Mammary epithelial cell (primary cell): ENCODE measurements at regions of chr16 and their contacts with region 1.

Region 1: GRCh38 chr16:23803591-23804123 is 32.1 kb upstream of the PRKCB start:
- DNase-seq: peak; percentile 38
- H3K4me3 ChIP-seq: no peak overlapping the region
- H3K27ac ChIP-seq: no peak overlapping the region
- H3K4me1 ChIP-seq: no peaks in the 10 kb centered on the region
- H3K27me3 ChIP-seq: no peaks in the 10 kb centered on the region
- CTCF ChIP-seq: peak; percentile 70 to 85

Region 2: DNA sequence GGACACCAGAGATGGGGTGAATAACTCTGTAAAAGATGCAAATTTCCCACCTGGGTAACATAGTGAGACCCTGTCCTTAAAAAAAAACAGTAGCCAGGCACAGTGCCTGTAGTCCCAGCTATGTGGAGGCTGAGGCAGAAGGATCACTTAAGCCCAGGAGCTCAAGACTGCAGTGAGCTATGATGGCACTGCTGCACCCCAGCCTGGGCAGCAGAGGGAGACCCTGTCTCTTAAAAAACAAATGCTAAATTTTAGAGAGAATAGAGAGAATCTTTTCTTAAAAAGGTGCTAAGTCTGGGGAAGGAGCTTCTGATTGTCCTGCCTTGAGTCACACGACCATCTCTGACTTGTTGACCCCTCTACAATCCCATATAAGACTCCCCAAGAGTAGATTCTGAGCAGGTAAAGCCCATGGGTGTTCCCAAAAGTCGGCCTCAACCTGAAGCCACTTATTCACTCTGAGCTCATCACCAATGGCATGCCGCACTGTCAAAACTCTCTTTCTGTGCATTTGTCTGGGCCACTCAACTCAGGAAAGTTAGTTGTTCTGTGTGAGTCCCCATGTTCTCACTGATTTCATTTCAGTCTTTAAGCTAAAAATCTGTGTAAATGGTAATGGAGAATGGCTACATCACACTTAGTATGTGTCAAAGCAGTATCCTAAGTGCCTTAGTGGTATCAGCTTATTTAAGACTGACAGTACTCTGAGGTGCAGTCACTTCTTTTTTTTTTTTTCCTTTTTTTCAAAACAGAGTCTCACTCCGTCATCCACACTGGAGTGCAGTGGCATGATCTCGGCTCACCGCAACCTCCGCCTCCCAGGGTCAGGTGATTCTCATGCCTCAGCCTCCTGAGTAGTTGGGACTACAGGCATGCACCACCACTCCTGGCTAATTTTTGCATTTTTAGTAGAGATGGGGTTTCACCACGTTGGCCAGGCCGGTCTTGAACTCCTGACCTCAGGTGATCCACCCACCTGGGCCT is 73.7 kb after region 1 on chr16:
- CTCF ChIA-PET with region 1: no interaction called
- dilution Hi-C with region 1: no loop called
- in situ Hi-C with region 1: no loop called
- intact Hi-C with region 1: loop called (anchors 10 kb)
- DNase-seq: no peak
- H3K4me3 ChIP-seq: no peak overlapping the region
- H3K27ac ChIP-seq: no peak overlapping the region
- H3K4me1 ChIP-seq: no peaks in the 10 kb centered on the region
- H3K27me3 ChIP-seq: no peaks in the 10 kb centered on the region
- CTCF ChIP-seq: peak in 1 of 2 donors; percentile 10

Region 3: GRCh38 chr16:24010440-24011089 is 206.9 kb after region 1 on chr16:
- CTCF ChIA-PET with region 1: interaction called, 14 read pairs
- dilution Hi-C with region 1: loop called (anchors 10 kb)
- in situ Hi-C with region 1: loop called (anchors 5 kb)
- intact Hi-C with region 1: loop called (anchors 1 kb)
- DNase-seq: peak; percentile 66
- H3K4me3 ChIP-seq: no peak overlapping the region
- H3K27ac ChIP-seq: no peak overlapping the region
- H3K4me1 ChIP-seq: no peaks in the 10 kb centered on the region
- H3K27me3 ChIP-seq: peaks cover 2% of the 10 kb centered on the region
- CTCF ChIP-seq: peak; percentile 76 to 85

Region 4: DNA sequence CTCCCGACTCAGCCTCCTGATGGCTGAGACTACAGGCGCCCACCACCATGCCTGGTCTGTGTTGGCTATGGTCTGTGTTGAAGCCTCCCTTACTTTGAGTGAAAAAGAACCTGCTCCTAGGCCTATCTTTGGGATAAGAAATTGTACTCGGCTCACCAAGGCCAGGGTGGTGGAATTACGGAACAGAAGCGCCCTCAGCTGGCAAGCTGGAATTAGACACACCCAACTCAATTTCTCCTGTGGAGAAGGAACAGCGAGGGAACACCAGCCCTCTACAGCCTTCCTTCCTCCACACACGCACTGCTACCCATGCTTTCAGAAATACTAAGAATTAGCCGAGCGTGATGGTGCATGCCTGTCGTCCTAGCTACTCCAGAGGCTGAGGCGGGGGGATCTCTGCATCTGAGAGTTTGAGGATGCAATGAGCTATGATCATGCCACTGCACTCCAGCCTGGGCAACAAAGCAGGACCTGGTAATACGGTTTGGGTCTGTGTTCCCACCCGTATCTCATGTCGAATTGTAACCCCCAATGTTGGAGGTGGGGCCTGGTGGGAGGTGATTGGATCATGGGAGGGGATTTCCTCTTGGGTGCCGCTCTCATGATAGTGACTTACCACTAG is 695.6 kb after region 1 on chr16:
- CTCF ChIA-PET with region 1: no interaction called
- dilution Hi-C with region 1: no loop called
- in situ Hi-C with region 1: loop called (anchors 25 kb)
- intact Hi-C with region 1: loop called (anchors 1 kb)
- DNase-seq: peak; percentile 39
- H3K4me3 ChIP-seq: no peak overlapping the region
- H3K27ac ChIP-seq: no peak overlapping the region
- H3K4me1 ChIP-seq: no peaks in the 10 kb centered on the region
- H3K27me3 ChIP-seq: peaks cover 2% of the 10 kb centered on the region
- CTCF ChIP-seq: peak; percentile 37 to 54